ENCODE measurements at regions of chr13 and their contacts with region 1.

Region 1: GRCh38 chr13:37602747-37603381 is 4.3 kb upstream of the POSTN start:
- DNase-seq: no peak
- H3K4me3 ChIP-seq: no peak overlapping the region
- H3K27ac ChIP-seq: no peak overlapping the region
- H3K4me1 ChIP-seq: peaks cover 0 to 29% (median 8%) of the 10 kb centered on the region in 4 donors
- H3K27me3 ChIP-seq: no peaks in the 10 kb centered on the region
- CTCF ChIP-seq: peak; percentile 25 to 56 (median 44)
- EP300 ChIP-seq: no peak
- POLR2A ChIP-seq: no peak

Region 2: DNA sequence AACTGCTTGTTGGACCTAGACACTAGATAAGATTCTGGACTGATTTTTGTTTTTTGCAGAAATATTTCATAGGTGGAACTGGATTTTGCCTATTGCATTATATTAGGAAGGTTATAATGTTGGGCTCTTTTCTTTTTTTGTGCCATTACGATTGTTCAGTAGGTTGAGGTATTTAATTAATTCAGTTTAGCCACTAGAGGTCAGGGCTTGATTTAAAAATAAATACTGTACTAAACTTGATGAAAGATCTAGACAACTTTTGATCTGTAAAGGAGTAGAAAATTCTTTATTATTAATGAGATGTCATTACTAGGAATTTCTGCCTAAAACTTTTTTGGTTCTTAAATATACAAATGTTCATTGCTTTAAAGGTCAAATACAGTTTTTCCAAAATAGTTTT is 528.2 kb before region 1 on chr13:
- intact Hi-C with region 1: loop called (anchors 5 kb)
- DNase-seq: no peak
- H3K4me3 ChIP-seq: no peak overlapping the region
- H3K27ac ChIP-seq: no peak overlapping the region
- H3K4me1 ChIP-seq: no peaks in the 10 kb centered on the region
- H3K27me3 ChIP-seq: no peaks in the 10 kb centered on the region
- CTCF ChIP-seq: peak in 3 of 4 experiments; percentile 22 to 48 (median 24)
- EP300 ChIP-seq: no peak
- POLR2A ChIP-seq: no peak

Region 3: DNA sequence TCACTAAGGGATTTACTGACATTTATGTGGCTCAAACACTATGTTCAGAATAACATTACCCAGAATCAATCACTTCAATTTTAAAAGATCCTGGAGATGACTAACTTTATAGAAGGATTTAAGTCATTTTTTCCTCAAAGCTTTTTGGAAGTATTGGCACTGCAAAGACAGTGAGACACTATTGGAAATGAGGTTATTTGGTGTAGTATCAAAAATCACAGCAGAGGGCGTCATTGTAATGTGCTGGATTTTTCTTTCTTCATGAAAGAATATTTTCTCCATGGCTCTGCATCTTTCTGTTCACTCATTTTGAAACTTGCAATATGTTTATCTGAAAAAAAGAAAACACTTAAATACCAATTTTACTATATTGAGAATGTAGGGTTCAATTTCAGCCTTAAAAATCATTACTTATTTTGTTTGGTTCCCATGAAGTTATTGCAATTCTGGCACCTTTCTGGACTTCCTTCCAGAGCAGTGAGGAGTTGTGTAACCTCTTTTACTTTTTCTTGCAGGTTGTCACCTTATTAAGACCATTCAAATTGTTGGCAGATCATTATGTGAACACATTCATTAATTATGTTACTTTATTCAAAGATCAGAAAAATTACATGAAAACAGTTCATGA is 493.7 kb before region 1 on chr13:
- intact Hi-C with region 1: loop called (anchors 2 kb)
- DNase-seq: no peak
- H3K4me3 ChIP-seq: no peak overlapping the region
- H3K27ac ChIP-seq: no peak overlapping the region
- H3K4me1 ChIP-seq: peaks cover 0 to 21% (median 3%) of the 10 kb centered on the region in 4 donors
- H3K27me3 ChIP-seq: no peaks in the 10 kb centered on the region
- CTCF ChIP-seq: peak in 3 of 4 experiments; percentile 42 to 68 (median 54)
- EP300 ChIP-seq: no peak
- POLR2A ChIP-seq: no peak

Region 4: DNA sequence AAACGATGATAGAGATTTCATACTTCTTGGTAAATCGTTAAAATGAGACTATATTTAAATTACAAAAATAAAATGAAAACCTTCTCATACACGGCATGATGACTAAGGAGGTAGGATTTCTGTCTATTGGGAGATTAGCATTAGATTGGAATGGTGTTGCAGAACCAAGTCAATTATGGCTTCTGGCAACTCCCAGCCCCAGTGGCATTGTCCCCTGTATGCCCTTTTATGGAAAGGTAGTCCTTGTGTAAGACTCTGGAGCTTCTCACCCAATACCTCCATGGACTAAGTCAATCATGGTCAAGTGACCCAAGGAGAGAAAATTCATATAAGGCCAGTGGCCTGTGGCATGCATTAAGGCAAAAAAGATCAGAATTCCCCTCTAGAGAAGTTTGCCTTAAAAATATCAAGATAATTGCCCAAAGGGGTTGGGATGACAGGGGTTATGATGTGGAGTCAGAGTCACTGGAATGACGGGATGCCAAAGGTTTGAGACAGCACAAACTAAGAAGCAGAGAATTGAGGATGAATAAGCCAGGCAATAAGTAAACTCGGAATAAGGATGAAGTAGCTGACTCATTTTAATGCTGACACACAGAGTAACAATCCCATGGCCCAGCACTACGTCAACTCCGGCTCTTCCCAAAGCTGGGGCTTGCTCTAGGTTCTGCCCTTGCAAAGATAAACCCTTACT is 53.5 kb after region 1 on chr13:
- intact Hi-C with region 1: no loop called
- DNase-seq: no peak
- H3K4me3 ChIP-seq: no peak overlapping the region
- H3K27ac ChIP-seq: peak overlapping the region in 1 of 4 donors; percentile 20
- H3K4me1 ChIP-seq: peaks cover 0 to 12% (median 0%) of the 10 kb centered on the region in 4 donors
- H3K27me3 ChIP-seq: no peaks in the 10 kb centered on the region
- CTCF ChIP-seq: no peak
- EP300 ChIP-seq: no peak
- POLR2A ChIP-seq: no peak

Region 5: DNA sequence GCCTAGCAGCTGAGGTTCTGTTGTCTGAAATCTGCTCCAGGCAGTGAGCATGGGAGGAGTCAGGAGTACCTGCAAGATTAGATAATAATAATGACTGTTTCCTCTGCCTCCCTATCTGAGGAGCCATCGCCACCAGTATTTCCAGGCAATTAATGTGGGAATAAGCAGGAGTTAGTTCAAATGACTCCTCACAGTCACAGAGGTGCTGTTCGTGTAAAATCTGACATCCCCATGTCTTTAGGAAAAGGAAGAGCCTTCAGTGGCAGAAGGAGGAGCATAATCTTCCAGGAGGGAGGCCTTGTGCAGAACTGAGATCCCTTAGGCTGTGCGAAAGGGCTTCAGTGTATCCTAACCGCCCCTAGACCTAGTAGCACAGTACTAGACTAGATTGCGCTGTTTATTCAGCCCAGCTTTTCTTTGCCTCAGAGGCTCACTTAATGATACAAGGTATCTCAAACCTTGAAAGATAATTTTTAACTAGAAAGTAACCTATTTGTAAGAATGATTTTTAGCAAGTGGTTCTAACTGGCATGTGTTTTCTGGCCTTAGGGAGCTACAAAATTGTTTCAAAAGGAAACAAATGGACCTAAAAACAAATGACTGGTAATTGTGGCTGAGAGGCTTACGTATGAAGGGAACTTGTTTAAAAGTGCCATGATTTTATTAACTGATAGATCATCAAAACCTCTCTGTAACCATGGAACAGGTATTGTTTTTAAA is 1133.0 kb after region 1 on chr13:
- intact Hi-C with region 1: no loop called
- DNase-seq: no peak
- H3K4me3 ChIP-seq: no peak overlapping the region
- H3K27ac ChIP-seq: peak overlapping the region in 3 of 4 donors; percentile 33 to 56 (median 51)
- H3K4me1 ChIP-seq: peaks cover 0 to 32% (median 5%) of the 10 kb centered on the region in 4 donors
- H3K27me3 ChIP-seq: no peaks in the 10 kb centered on the region
- CTCF ChIP-seq: no peak
- EP300 ChIP-seq: no peak
- POLR2A ChIP-seq: no peak

Measured in sigmoid colon (tissue), 7 donors.